ENCODE measurements at regions of chr20 and their contacts with region 1.

Region 1: DNA sequence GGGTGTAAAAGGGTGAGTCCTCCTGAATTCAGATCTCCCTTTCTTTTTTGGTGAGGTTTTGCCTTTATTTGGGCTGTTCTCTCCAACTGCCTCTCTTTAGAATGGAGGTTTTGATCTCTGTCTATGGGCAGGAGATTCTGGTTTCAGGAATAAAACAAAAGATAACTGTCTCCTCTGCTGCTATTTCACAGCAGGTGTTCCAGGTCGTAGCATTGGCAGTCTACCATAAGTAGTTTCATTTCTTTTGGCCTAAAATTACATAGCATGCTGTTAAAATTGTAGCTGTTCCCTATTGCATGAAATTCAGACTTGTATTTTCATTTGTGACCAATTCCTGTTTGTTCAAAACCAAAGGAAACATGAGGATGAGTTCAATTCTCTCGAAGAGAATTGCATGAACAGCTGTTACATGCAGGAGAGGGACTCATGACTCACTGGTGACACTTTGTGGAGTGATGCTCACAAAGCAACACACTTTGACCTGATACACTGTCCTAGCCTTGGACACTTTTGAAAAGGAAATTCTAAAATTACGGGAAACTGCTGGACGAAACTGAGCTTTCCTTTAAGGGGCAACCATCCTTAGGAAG is 76.8 kb upstream of the SIRPG start:
- DNase-seq: peak; percentile 79
- ATAC-seq: peak; percentile 97
- H3K4me3 ChIP-seq: no peak overlapping the region
- H3K27ac ChIP-seq: peak overlapping the region; percentile 62
- H3K4me1 ChIP-seq: peaks cover 19% of the 10 kb centered on the region
- H3K27me3 ChIP-seq: no peaks in the 10 kb centered on the region
- CTCF ChIP-seq: peak; percentile 84

Region 2: GRCh38 chr20:1567392-1568162 is 166.8 kb before region 1 on chr20:
- CTCF ChIA-PET with region 1: no interaction called
- POLR2A ChIA-PET with region 1: no interaction called
- intact Hi-C with region 1: loop called (anchors 1 kb)
- DNase-seq: peak; percentile 99
- ATAC-seq: peak; percentile 79
- H3K4me3 ChIP-seq: no peak overlapping the region
- H3K27ac ChIP-seq: peak overlapping the region; percentile 98
- H3K4me1 ChIP-seq: peaks cover 47% of the 10 kb centered on the region
- H3K27me3 ChIP-seq: no peaks in the 10 kb centered on the region
- CTCF ChIP-seq: no peak

Region 3: DNA sequence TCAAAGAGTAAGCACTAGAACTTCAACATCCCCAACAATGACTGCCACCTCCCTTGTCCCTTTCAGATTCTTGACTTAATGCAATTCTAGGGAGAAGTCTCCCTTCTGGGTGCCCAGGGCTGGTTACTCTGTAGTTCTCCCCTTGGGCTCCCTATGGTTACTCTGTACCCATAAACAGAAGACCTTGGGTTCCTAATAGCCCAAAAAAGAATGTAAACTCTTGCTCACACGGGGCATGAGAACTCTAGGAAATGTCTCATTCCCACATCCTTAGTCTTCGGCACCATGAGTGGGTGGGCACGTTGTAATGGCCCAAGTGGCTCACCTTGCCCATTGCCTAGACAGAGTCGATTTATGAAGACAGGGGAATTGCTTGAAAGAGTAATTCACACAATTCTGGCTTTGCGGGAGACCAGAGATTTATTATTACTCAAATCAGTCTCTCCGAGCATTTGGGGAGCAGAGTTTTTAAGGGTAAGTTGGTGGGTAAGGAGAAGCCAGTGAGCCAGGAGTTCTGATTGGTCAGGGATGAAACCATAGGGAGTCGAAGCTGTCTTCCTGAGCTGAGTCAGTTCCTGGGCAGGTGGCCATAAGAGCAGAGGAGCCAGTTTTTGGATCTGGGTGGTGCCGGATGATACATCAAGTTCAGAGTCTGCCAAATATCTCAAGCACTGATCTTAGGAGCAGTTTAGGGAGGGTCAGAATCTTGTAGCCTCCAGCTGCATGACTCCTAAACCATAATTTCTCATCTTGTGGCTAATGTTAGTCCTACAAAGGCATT is 15.6 kb before region 1 on chr20:
- CTCF ChIA-PET with region 1: no interaction called
- POLR2A ChIA-PET with region 1: no interaction called
- intact Hi-C with region 1: loop called (anchors 2 kb)
- DNase-seq: peak; percentile 99
- ATAC-seq: peak; percentile 96
- H3K4me3 ChIP-seq: 0 out of 2 replicates have a peak overlapping the region, but pooled peaks have one; percentile 15
- H3K27ac ChIP-seq: peak overlapping the region; percentile 97
- H3K4me1 ChIP-seq: peaks cover 61% of the 10 kb centered on the region
- H3K27me3 ChIP-seq: no peaks in the 10 kb centered on the region
- CTCF ChIP-seq: no peak